Caco-2 (cell line): ENCODE measurements at regions of chr2 and their contacts with region 1.

Region 1: DNA sequence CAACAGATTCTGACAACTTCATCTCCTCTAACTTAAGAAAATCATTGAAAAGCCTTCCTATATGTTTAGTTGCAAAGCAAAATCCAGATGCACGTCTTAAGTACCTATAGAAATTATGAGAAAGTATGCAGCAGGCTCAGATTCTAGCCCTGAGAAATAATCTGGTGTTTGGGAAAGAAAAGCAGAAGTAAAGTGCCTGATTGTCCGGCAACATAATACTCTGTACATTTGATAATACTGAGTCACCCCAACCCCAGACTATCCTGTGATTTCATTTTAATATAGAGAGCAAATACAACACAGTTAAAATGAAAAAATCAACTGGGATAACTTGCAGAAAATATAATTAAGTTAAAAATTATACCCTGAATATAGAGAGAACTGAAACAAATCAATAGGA is 13.5 kb downstream of the RFX8 start:
- DNase-seq: no peak
- H3K4me3 ChIP-seq: no peak overlapping the region
- H3K4me3 Mint-ChIP-seq: no peak overlapping the region
- H3K27ac Mint-ChIP-seq: no peak overlapping the region
- H3K4me1 ChIP-seq: no peaks in the 10 kb centered on the region
- H3K4me1 Mint-ChIP-seq: peaks cover 6% of the 10 kb centered on the region
- H3K27me3 ChIP-seq: no peaks in the 10 kb centered on the region
- H3K27me3 Mint-ChIP-seq: no peaks in the 10 kb centered on the region
- CTCF ChIP-seq: no peak

Region 2: DNA sequence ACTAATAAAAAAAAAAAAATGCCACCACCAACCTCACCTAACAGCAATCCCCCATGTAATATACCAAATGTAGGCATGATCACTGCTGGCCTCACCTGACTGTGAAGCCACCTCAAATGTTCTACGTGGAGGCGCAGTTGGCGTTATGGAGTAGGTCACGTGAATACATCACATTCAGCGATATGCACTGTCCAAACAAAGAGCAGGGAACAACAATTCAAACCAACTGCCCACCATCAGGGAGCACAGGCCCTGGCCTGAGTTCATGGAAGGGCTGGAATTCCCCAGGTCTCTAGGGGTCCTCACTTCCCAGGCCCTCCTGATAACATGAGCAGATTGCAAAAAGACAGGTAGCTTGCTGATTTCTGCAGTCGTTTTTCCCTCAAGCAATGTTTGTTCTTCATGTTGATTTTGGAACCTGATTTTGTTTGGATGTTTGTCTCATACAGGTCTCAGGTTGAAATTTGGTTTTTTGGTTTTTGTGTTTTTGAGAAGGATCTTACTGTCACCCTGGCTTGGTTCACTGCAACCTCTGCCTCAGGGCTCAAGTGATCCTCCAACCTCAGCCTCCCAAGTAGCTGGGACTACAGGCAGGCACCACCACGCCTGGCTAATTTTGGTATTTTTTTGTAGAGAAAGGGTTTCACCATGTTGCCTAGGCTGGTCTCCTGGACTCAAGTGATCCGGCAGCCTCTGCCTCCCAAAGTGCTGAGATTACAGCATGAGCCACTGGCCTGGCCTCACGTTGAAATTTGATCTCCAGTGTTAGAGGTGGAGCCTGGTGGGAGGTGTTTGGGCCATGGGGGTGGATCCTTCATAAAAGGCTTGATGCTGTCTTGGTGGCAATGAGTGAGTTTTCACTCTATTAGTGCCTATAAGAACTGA is 325.7 kb before region 1 on chr2:
- CTCF ChIA-PET with region 1: no interaction called
- POLR2A ChIA-PET with region 1: no interaction called
- intact Hi-C with region 1: no loop called
- DNase-seq: no peak
- H3K4me3 ChIP-seq: no peak overlapping the region
- H3K4me3 Mint-ChIP-seq: no peak overlapping the region
- H3K27ac Mint-ChIP-seq: no peak overlapping the region
- H3K4me1 ChIP-seq: peaks cover 6% of the 10 kb centered on the region; the same call in 1 of the 2 replicates
- H3K4me1 Mint-ChIP-seq: peaks cover 6% of the 10 kb centered on the region
- H3K27me3 ChIP-seq: no peaks in the 10 kb centered on the region
- H3K27me3 Mint-ChIP-seq: no peaks in the 10 kb centered on the region
- CTCF ChIP-seq: no peak

Region 3: GRCh38 chr2:101479328-101479727 is 17.9 kb after region 1 on chr2:
- CTCF ChIA-PET with region 1: no interaction called
- POLR2A ChIA-PET with region 1: no interaction called
- intact Hi-C with region 1: loop called (anchors 2 kb)
- DNase-seq: no peak
- H3K4me3 ChIP-seq: no peak overlapping the region
- H3K4me3 Mint-ChIP-seq: no peak overlapping the region
- H3K27ac Mint-ChIP-seq: no peak overlapping the region
- H3K4me1 ChIP-seq: 0 out of 2 replicates have a peak, but pooled peaks cover 16% of the 10 kb centered on the region
- H3K4me1 Mint-ChIP-seq: peaks cover 27% of the 10 kb centered on the region
- H3K27me3 ChIP-seq: no peaks in the 10 kb centered on the region
- H3K27me3 Mint-ChIP-seq: no peaks in the 10 kb centered on the region
- CTCF ChIP-seq: no peak